CD8-positive, alpha-beta T cell (primary cell): ENCODE measurements at regions of chr1 and their contacts with region 1.

Region 1: DNA sequence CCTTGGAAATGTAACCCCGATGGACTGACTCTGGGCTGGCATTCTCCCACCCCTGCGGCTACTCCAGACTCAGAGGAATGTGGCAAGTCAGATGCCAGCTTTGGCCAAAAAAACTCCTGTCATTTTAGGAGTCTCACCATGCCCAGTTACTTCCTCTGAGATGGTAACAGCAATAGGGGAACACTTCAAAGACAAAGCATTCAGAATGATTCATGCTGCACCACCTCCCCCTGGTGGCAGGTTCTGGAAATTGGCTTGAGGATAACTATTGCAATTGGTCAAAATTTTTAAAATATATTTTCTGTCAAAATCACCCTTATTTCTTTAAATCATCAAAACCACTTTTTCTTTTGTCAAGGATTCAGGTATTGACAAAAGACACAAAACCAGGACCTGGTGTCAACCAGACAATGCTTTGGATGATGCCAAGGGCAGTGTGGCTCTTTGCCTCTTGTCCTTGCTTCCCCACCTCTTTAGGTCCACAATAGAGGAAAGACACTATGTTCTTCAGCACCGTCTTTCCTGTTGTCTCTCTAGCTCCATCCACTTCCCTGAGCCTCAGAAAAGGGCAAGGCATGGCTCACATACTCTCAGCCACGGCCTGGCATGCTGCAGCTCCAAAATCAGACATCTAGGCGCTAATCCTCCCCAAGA is 9.9 kb upstream of the CDCA8 start:
- DNase-seq: peak; percentile 58 to 85 (median 76)
- ATAC-seq: peak; percentile 95
- H3K4me3 ChIP-seq: no peak overlapping the region
- H3K4me3 Mint-ChIP-seq: no peak overlapping the region
- H3K27ac ChIP-seq: no peak overlapping the region
- H3K27ac Mint-ChIP-seq: peak overlapping the region; percentile 74
- H3K4me1 ChIP-seq: peaks cover 3% of the 10 kb centered on the region
- H3K4me1 Mint-ChIP-seq: peaks cover 3% of the 10 kb centered on the region
- H3K27me3 ChIP-seq: no peaks in the 10 kb centered on the region
- H3K27me3 Mint-ChIP-seq: no peaks in the 10 kb centered on the region
- CTCF ChIP-seq: peak; percentile 89

Region 2: DNA sequence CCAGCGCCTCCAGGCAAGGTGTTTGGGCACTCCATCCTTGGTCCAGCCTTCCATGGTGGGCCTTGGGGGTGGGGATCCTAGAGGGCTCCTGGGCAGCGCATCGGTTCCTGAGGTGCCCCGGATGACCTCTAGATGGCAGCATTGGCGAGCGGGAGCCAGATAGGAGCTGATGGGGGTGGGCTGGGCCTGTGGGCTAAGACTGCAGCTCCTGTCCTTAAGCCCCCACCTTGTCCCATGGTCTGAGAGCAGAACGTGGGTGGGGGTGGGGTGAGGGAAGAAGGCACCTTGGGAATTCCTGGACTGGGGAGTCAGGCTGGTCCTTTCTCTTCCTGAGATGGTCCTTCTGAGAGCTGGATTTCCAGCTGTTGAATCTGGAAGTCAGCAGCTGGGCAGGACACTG is 1106.3 kb before region 1 on chr1:
- CTCF ChIA-PET with region 1: no interaction called
- POLR2A ChIA-PET with region 1: no interaction called
- intact Hi-C with region 1: loop called in 1 of 2 experiments (anchors 5 kb)
- DNase-seq: peak; percentile 9 to 64 (median 42)
- ATAC-seq: no peak
- H3K4me3 ChIP-seq: no peak overlapping the region
- H3K4me3 Mint-ChIP-seq: no peak overlapping the region
- H3K27ac ChIP-seq: no peak overlapping the region
- H3K27ac Mint-ChIP-seq: no peak overlapping the region
- H3K4me1 ChIP-seq: no peaks in the 10 kb centered on the region
- H3K4me1 Mint-ChIP-seq: no peaks in the 10 kb centered on the region
- H3K27me3 ChIP-seq: peaks cover 0 to 2% of the 10 kb centered on the region in 2 experiments
- H3K27me3 Mint-ChIP-seq: peaks cover 37% of the 10 kb centered on the region
- CTCF ChIP-seq: peak; percentile 70

Region 3: DNA sequence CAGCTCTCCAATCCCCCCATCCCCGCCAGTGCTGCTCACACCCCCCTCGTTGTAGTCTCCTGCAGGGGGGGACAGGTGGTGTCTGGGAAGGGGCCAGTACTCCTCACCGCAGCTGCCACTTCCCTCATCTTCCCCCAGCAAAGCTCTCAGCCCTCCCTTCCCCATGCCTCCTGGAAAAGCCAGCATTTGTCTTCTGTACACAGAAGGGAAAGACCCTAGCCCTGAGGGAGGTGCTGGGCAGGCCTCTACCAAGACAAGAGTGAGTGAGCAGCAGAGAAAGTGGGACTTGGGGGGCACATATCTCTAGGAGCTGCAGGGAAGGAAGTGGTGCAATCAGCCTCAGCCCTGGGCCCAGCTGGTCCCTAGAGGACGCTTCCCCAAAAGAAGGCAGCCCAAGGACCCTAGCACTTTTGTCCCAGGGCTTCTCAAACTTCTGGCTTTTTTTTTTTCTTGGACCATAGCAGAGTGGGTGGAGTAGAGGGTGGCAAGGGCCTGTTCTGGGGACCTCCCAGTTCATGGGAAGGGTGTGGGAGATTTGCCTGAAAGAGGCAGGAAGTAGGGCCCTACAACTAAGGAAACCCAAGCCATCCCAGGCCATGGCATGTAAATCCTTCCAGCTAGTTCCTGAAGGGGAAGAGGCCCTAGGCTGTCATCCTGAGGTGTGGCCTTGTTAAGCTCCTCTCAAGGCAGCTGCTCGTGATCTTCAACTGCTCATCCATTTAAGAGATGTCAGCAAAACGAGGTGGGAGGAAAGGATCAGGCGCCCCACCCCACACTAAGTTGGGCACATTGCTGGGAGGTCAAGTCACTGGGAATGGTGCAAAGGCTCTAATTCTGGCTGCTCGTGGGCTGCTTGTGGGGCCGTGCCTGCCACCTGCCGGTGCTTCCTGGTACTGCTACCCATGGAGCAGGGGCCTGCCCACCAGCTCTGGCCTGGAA is 195.5 kb before region 1 on chr1:
- CTCF ChIA-PET with region 1: interaction called, 31 read pairs
- POLR2A ChIA-PET with region 1: interaction called, 4 read pairs
- intact Hi-C with region 1: loop called in 1 of 2 experiments (anchors 1 kb)
- DNase-seq: peak; percentile 54 to 88 (median 82)
- ATAC-seq: peak; percentile 74
- H3K4me3 ChIP-seq: no peak overlapping the region
- H3K4me3 Mint-ChIP-seq: no peak overlapping the region
- H3K27ac ChIP-seq: peak overlapping the region in 1 of 2 experiments; percentile 17
- H3K27ac Mint-ChIP-seq: peak overlapping the region; percentile 71
- H3K4me1 ChIP-seq: peaks cover 11% of the 10 kb centered on the region
- H3K4me1 Mint-ChIP-seq: peaks cover 20% of the 10 kb centered on the region
- H3K27me3 ChIP-seq: no peaks in the 10 kb centered on the region
- H3K27me3 Mint-ChIP-seq: no peaks in the 10 kb centered on the region
- CTCF ChIP-seq: peak; percentile 94

Region 4: GRCh38 chr1:37561133-37562132 is 121.0 kb before region 1 on chr1:
- CTCF ChIA-PET with region 1: interaction called, 7 read pairs
- POLR2A ChIA-PET with region 1: no interaction called
- intact Hi-C with region 1: loop called (anchors 1 to 2 kb)
- DNase-seq: peak in 5 of 9 experiments; percentile 20 to 53 (median 36)
- ATAC-seq: peak; percentile 58
- H3K4me3 ChIP-seq: no peak overlapping the region
- H3K4me3 Mint-ChIP-seq: no peak overlapping the region
- H3K27ac ChIP-seq: no peak overlapping the region
- H3K27ac Mint-ChIP-seq: no peak overlapping the region
- H3K4me1 ChIP-seq: no peaks in the 10 kb centered on the region
- H3K4me1 Mint-ChIP-seq: no peaks in the 10 kb centered on the region
- H3K27me3 ChIP-seq: no peaks in the 10 kb centered on the region
- H3K27me3 Mint-ChIP-seq: peaks cover 2% of the 10 kb centered on the region
- CTCF ChIP-seq: peak; percentile 42

Region 5: GRCh38 chr1:37699147-37699546 is 16.7 kb after region 1 on chr1:
- CTCF ChIA-PET with region 1: interaction called, 11 read pairs
- POLR2A ChIA-PET with region 1: no interaction called
- intact Hi-C with region 1: no loop called
- DNase-seq: peak in 2 of 9 experiments; percentile 17 to 44
- ATAC-seq: no peak
- H3K4me3 ChIP-seq: peak overlapping the region in 1 of 2 experiments; percentile 22
- H3K4me3 Mint-ChIP-seq: peak overlapping the region; percentile 35
- H3K27ac ChIP-seq: peak overlapping the region in 1 of 2 experiments; percentile 69
- H3K27ac Mint-ChIP-seq: peak overlapping the region; percentile 47
- H3K4me1 ChIP-seq: no peaks in the 10 kb centered on the region
- H3K4me1 Mint-ChIP-seq: peaks cover 2% of the 10 kb centered on the region
- H3K27me3 ChIP-seq: no peaks in the 10 kb centered on the region
- H3K27me3 Mint-ChIP-seq: no peaks in the 10 kb centered on the region
- CTCF ChIP-seq: no peak